CD4-positive, alpha-beta memory T cell (primary cell): ENCODE measurements at regions of chr11 and their contacts with region 1.

Region 1: DNA sequence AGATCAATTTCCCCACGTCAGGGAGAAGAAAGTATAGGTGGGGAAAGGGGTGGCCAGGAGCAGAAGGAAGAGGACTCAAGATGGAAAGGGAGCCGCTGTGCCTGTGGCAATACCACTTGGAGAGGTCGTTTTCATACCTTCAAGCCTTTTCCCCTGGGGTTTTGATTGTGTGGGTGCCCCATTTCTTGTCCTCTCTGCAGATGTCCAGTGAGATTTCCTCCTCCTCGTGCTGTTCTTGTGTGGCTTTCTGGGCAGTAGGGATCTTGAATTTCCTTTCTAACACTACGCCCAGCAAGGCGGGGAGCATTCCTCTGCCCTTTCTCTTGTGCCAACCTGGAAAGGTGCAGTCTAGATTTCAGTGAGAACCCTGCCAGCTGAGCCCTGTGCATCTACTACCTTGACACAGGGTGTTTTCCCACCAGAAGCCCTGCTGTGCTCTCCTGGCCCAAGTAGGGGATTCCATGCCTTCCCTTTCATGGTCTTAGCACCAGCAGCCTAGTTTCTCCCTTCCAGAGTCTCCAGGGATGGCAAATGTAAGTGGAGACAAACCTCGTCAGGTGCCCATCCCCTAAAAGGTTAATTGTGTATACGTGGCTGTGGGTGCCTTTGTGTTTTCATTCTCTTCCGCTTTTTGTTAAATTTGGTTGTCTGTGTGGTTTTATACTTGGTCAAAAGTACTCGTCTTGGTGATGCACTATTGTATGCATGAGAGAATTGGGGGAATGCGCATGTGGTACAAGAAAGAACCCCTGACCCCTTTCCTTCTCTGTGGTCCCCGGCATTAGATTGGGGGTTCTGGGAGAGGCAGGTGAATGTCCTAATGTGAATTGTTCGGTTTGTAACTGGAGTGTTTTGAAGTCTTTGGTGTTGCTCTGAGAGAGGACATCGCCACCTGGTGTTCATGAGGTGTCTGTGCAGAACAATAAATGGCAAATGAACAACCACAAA is 71.4 kb upstream of the MPEG1 start:
- DNase-seq: peak; percentile 55 to 65 (median 64)
- H3K4me3 ChIP-seq: peak overlapping the region in 1 of 2 donors; percentile 23
- H3K4me3 Mint-ChIP-seq: peak overlapping the region; percentile 38 to 85 (median 72)
- H3K27ac ChIP-seq: no peak overlapping the region
- H3K27ac Mint-ChIP-seq: peak overlapping the region in 4 of 7 donors; percentile 6 to 62 (median 34)
- H3K4me1 ChIP-seq: peaks cover 15% of the 10 kb centered on the region
- H3K4me1 Mint-ChIP-seq: peaks cover 10 to 19% (median 15%) of the 10 kb centered on the region in 4 donors
- H3K27me3 ChIP-seq: no peaks in the 10 kb centered on the region
- H3K27me3 Mint-ChIP-seq: peaks cover 3 to 4% of the 10 kb centered on the region in 2 donors

Region 2: DNA sequence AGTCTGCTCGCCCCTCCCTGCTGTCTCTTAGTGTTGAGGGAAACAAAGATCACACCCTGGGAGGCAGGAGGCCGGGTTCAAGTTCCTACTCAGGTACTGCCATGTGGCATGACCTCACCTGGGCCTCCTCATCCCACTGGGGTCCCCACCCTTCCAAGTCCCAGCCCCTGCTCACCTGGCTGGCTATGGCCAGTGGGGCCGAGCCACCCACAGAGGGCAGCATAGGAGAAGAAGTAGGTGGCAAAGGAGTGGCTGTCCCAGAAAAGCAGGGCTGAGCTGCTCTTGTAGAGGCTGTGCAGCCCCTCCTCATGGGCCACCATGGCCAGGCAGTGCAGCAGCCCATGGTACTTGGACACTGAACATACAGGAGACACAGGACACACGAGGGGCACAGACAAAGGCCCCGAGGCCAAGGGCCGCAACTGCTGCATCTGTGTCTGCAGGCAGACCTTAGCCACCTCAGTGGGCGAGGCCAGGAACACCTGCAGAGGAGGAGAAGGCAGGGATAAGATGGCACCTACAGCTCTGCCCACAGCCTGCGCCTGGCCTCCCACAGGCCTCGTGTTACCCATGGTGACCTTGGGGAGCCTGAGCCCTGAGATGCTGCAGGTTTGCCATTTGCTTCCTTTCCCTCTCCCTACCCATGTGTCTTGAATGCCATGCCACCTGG is 20.7 kb before region 1 on chr11:
- CTCF ChIA-PET with region 1: interaction called, 10 read pairs
- POLR2A ChIA-PET with region 1: no interaction called
- intact Hi-C with region 1: loop called (anchors 1 kb)
- DNase-seq: peak in 4 of 5 donors; percentile 16 to 30 (median 25)
- H3K4me3 ChIP-seq: no peak overlapping the region
- H3K4me3 Mint-ChIP-seq: no peak overlapping the region
- H3K27ac ChIP-seq: no peak overlapping the region
- H3K27ac Mint-ChIP-seq: no peak overlapping the region
- H3K4me1 ChIP-seq: no peaks in the 10 kb centered on the region
- H3K4me1 Mint-ChIP-seq: peaks cover 0 to 5% (median under 1%) of the 10 kb centered on the region in 4 donors
- H3K27me3 ChIP-seq: no peaks in the 10 kb centered on the region
- H3K27me3 Mint-ChIP-seq: no peaks in the 10 kb centered on the region

Region 3: GRCh38 chr11:59429924-59430516 is 145.9 kb after region 1 on chr11:
- CTCF ChIA-PET with region 1: no interaction called
- POLR2A ChIA-PET with region 1: no interaction called
- intact Hi-C with region 1: loop called (anchors 1 kb)
- DNase-seq: peak; percentile 38 to 64 (median 57)
- H3K4me3 ChIP-seq: no peak overlapping the region
- H3K4me3 Mint-ChIP-seq: no peak overlapping the region
- H3K27ac ChIP-seq: no peak overlapping the region
- H3K27ac Mint-ChIP-seq: no peak overlapping the region
- H3K4me1 ChIP-seq: no peaks in the 10 kb centered on the region
- H3K4me1 Mint-ChIP-seq: no peaks in the 10 kb centered on the region
- H3K27me3 ChIP-seq: no peaks in the 10 kb centered on the region
- H3K27me3 Mint-ChIP-seq: peaks cover 4 to 9% of the 10 kb centered on the region in 2 donors

Region 4: DNA sequence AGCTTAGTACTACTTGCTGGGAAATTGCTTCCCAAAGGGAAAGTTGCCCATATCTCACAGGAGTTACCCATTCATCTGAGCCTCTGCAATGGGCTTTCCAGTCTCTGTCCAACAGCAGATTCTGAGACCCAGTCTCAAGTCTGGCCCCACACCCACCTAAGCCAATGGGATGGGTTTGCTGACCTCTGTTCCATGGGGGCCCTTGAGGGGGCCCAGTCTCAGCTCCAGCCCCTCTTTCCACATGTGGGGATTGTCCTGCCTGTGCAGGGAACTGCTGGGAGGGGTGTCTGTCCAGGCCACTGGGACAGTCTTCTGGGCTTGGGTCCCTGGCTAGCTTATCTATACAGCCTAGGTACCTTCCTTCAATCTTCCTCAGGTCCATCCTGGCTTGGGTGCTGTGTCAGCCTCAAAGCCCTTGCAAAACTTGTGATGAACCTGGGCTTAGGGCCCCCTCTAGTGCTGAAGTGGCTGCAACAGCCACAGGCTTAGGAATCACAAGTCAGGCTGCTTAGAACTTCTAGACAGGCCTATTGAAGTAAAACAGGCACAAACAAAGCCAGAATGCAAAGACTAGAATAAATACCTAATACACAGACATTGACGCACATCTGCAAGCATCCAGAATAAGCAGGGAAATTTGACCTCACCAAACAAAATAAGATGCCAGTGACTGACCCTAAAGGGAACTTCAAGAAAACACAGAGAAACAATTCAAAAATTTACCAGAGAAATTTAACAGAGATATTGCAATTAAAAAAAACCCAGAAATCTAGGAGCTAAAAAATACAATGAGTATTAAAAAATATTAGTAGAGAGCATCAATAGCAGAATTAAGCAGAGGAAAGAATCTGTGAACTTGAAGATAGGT is 396.4 kb after region 1 on chr11:
- CTCF ChIA-PET with region 1: no interaction called
- POLR2A ChIA-PET with region 1: no interaction called
- intact Hi-C with region 1: loop called (anchors 10 kb)
- DNase-seq: peak; percentile 48 to 57 (median 52)
- H3K4me3 ChIP-seq: no peak overlapping the region
- H3K4me3 Mint-ChIP-seq: no peak overlapping the region
- H3K27ac ChIP-seq: no peak overlapping the region
- H3K27ac Mint-ChIP-seq: no peak overlapping the region
- H3K4me1 ChIP-seq: no peaks in the 10 kb centered on the region
- H3K4me1 Mint-ChIP-seq: no peaks in the 10 kb centered on the region
- H3K27me3 ChIP-seq: no peaks in the 10 kb centered on the region
- H3K27me3 Mint-ChIP-seq: peaks cover 8 to 12% of the 10 kb centered on the region in 2 donors